ENCODE measurements at regions of chr20 and their contacts with region 1.

Region 1: DNA sequence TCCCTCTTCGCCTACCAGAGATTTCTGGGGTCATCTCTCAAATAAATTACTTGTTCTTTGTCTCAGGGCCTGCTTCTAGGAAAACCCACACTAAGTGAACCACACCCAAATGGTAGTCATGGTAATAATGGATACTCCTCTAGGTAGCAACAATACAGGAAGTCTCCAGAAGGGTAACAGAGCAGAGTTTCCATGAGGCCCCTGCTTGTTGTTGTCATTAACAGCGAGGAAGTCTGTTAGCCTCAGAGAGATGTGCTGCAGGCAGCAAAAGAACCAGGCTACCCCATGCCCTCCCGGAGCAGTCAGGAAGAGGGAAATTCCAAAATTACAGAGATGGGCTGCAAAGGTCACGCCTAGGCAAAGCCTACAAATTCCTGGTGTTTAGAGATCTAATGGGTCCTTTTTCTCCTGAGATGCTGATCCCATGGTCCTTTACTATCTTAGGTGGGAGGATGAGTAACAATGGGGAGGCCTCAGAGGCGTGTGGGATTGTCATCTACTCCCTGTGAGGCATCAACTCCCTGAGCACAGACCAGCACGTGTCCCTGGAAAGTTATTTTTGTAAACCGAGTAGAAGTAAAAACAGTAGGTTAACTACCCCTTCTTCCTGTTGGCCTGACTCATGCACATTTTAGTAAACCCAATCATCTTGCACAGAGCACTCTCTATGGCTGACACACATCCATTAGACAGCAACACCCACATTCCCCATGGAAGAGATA is 10.1 kb downstream of the ISM1 start:
- DNase-seq: peak in 8 of 9 donors; percentile 46 to 87 (median 80)
- ATAC-seq: peak; percentile 97
- H3K4me3 ChIP-seq: peak overlapping the region; percentile 28
- H3K4me3 Mint-ChIP-seq: peak overlapping the region; percentile 26 to 88 (median 69)
- H3K27ac ChIP-seq: peak overlapping the region; percentile 77
- H3K27ac Mint-ChIP-seq: peak overlapping the region; percentile 92 to 98 (median 96)
- H3K4me1 ChIP-seq: peaks cover 23 to 39% of the 10 kb centered on the region in 2 donors
- H3K4me1 Mint-ChIP-seq: peaks cover 27 to 50% (median 44%) of the 10 kb centered on the region in 7 donors
- H3K27me3 ChIP-seq: no peaks in the 10 kb centered on the region
- H3K27me3 Mint-ChIP-seq: peaks cover 0 to 8% (median 0%) of the 10 kb centered on the region in 5 donors

Region 2: DNA sequence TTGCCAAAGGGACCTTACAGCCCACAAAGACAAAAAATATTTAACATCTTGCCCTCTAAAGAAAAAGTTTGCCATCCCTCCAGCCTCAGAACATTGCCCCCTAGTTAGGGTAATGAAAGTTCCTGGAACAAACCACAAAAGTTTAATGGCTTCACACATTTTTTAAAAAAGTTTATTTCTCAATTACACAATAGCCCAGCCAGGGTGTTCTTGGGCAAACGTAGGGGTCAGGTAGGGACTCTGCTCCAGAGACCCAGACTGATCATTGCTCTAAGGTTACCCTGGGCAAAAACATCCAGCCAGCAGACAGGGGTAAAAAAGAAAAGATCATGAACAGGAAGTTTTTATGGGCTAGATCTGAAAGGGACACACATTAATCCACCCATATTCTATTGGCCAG is 14.7 kb before region 1 on chr20:
- CTCF ChIA-PET with region 1: no interaction called
- POLR2A ChIA-PET with region 1: interaction called, 9 read pairs
- intact Hi-C with region 1: loop called (anchors 1 kb)
- DNase-seq: no peak
- ATAC-seq: no peak
- H3K4me3 ChIP-seq: no peak overlapping the region
- H3K4me3 Mint-ChIP-seq: peak overlapping the region in 1 of 10 donors; percentile 6
- H3K27ac ChIP-seq: no peak overlapping the region
- H3K27ac Mint-ChIP-seq: peak overlapping the region in 1 of 9 donors; percentile 19
- H3K4me1 ChIP-seq: peaks cover 5 to 10% of the 10 kb centered on the region in 2 donors
- H3K4me1 Mint-ChIP-seq: peaks cover 6 to 22% (median 12%) of the 10 kb centered on the region in 7 donors
- H3K27me3 ChIP-seq: peaks cover 10 to 18% of the 10 kb centered on the region in 2 donors
- H3K27me3 Mint-ChIP-seq: peaks cover 35 to 78% (median 46%) of the 10 kb centered on the region in 5 donors

Region 3: DNA sequence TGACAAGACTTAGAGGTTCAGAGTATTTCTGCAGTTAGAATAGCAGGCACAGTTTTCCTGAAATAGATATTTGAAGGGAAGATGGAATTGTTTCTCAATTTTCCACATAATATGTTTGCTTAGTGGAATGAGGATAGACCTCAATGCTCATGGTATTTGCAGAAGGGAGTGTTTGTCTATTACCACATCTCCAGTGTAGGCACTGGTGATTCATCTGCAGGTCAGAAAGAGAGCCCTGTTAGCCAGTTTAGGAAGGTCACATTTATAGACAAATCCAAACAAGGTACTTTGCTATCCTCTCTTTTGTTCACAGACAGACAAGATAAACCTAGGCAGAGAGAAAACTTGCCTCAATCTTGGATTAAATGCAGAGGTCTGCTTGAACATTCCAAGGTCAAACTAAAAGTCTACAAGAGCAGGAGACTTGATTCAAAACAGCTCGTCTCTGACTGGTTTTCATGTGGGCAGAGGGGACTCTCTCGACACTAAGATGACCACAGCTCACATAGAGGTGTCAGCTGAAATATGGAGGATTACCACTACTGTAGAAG is 12.7 kb after region 1 on chr20:
- CTCF ChIA-PET with region 1: interaction called, 3 read pairs
- POLR2A ChIA-PET with region 1: interaction called, 12 read pairs
- intact Hi-C with region 1: loop called (anchors 1 kb)
- DNase-seq: no peak
- ATAC-seq: no peak
- H3K4me3 ChIP-seq: no peak overlapping the region
- H3K4me3 Mint-ChIP-seq: no peak overlapping the region
- H3K27ac ChIP-seq: no peak overlapping the region
- H3K27ac Mint-ChIP-seq: peak overlapping the region in 1 of 9 donors; percentile 96
- H3K4me1 ChIP-seq: peaks cover 16 to 26% of the 10 kb centered on the region in 2 donors
- H3K4me1 Mint-ChIP-seq: peaks cover 23 to 42% (median 32%) of the 10 kb centered on the region in 7 donors
- H3K27me3 ChIP-seq: no peaks in the 10 kb centered on the region
- H3K27me3 Mint-ChIP-seq: no peaks in the 10 kb centered on the region

Region 4: DNA sequence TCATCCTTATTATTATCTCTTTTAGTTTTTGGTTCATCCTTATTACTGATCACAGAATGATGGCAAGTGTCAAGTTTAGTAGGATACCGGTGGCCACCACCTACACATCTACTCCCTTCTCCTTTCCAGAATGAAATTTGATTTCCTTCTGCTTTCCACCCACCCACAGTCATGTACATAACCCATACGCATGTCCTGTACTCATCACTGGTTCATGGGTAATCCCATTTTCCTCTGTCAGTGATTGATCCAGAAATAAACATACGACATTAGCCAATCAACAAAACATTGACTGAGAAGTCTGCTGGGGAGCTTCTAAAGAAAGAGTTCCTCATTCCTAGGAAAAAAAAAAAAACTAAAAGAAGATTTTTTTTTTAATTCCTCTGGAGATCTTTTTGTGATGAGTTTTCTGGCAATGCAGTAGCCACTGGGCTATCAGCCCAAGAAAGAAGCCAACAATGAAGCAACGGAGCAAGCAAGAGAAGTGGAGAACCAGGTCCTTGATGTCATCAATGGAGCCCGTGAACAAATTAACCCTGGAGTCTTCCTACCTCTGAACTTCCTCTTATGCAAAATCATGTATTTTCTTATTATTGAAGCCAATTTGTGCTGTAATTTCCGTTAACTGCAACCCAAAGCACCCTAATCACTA is 279.8 kb after region 1 on chr20:
- CTCF ChIA-PET with region 1: no interaction called
- POLR2A ChIA-PET with region 1: no interaction called
- intact Hi-C with region 1: no loop called
- DNase-seq: no peak
- ATAC-seq: no peak
- H3K4me3 ChIP-seq: no peak overlapping the region
- H3K4me3 Mint-ChIP-seq: no peak overlapping the region
- H3K27ac ChIP-seq: no peak overlapping the region
- H3K27ac Mint-ChIP-seq: no peak overlapping the region
- H3K4me1 ChIP-seq: no peaks in the 10 kb centered on the region
- H3K4me1 Mint-ChIP-seq: peaks cover 0 to under 1% (median 0%) of the 10 kb centered on the region in 7 donors
- H3K27me3 ChIP-seq: no peaks in the 10 kb centered on the region
- H3K27me3 Mint-ChIP-seq: no peaks in the 10 kb centered on the region